ENCODE measurements at regions of chr4 and their contacts with region 1.

Region 1: DNA sequence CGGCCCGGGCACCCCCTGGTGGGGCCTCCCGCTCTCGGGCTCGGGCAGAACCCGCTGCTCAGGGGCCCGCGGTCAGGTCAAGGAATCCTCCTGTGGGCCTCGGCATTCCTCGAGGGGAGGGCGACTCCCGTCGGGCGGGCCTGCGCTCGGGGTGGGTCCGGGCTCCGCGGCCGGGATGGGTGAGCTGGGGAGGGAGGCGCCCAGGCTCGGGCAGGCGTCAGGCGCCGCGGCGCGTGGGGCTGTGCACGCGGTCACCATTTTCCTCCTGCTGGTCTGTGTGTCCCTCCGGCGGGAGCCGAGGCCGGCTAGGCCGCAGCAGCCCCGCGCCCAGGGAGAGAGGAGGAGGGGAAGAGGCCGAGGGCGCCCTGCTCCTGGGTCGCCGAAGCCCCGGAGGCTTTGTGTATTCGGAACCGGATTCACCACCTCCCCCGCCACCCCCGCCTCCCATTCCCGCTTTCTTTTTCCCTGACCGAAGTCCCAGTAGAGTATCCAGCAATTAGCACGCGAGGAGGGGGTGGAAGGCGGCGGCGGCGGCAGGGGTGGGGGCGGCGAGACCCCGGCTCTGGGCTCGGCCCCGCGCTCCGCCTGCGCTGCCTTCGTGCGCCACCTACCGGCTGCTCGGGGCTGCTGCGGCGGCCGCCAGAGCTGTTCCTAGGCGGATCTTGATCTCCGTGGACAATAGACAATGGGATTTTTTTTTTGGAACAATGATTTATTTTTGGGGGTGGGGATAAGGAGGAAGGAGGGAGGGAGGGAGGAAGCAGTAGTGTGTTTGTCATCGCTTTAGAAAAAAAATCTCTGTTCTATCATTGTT is 99.0 kb upstream of the MAML3 start:
- DNase-seq: peak; percentile 92
- H3K4me3 ChIP-seq: peak overlapping the region; percentile 43 to 76 (median 61)
- H3K27ac ChIP-seq: peak overlapping the region; percentile 67 to 90 (median 84)
- H3K4me1 ChIP-seq: peaks cover 0 to 35% (median 19%) of the 10 kb centered on the region in 6 donors
- H3K27me3 ChIP-seq: peaks cover 0 to 21% (median 6%) of the 10 kb centered on the region in 7 donors
- CTCF ChIP-seq: peak; percentile 72 to 98 (median 91)
- POLR2A ChIP-seq: no peak

Region 2: DNA sequence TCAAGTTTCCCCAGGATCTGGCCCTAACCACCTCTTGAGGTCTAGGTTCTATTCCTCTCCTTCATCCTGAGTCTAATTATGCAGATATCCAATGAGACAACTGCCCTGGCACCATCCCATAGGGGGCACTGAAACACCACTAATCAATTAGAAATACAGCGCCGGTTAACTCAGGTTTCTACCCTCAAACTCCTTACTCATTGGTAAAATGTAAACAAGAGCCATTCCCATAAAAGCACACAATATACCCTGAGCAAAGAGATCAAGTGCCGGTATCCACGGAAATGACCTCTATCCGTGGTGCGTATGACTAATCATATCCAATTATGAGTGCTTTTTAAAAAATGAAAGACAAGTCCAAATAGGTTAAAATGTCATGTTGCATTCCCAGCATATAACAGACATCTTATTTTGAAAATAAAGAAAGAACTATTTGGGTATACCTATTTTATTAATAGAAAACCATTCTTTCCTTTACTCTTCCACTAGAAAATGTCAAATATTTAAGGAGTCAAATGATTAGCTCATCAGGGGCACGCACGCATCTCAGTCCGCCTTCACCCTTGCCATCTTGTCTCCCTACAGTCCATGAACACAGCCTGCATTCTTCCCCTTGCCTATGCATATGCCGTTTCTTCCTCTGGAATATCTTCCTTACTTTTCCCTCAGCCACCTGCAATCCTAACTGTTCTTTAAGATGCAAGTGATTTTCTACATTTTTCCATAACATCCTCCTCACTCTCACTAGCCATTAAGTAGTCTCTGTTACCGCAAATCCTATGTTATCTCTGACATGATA is 240.1 kb before region 1 on chr4:
- intact Hi-C with region 1: loop called (anchors 5 kb)
- DNase-seq: no peak
- H3K4me3 ChIP-seq: no peak overlapping the region
- H3K27ac ChIP-seq: peak overlapping the region in 2 of 8 donors; percentile 16 to 23
- H3K4me1 ChIP-seq: peaks cover 0 to 15% (median 8%) of the 10 kb centered on the region in 6 donors
- H3K27me3 ChIP-seq: no peaks in the 10 kb centered on the region
- CTCF ChIP-seq: peak; percentile 44 to 84 (median 75)
- POLR2A ChIP-seq: no peak

Region 3: GRCh38 chr4:140153718-140154571 is 99.0 kb before region 1 on chr4 and contains the start of gene MAML3:
- intact Hi-C with region 1: loop called (anchors 5 kb)
- DNase-seq: peak; percentile 96
- H3K4me3 ChIP-seq: peak within 1 kb of the TSS; percentile 60 to 89 (median 76)
- H3K27ac ChIP-seq: peak within 1 kb of the TSS; percentile 93 to 99 (median 98)
- H3K4me1 ChIP-seq: peaks cover 0 to 86% (median 46%) of the 10 kb centered on the region in 6 donors
- H3K27me3 ChIP-seq: peaks cover 0 to 67% (median 8%) of the 10 kb centered on the region in 7 donors
- CTCF ChIP-seq: peak in 1 of 11 experiments; percentile 14
- POLR2A ChIP-seq: peak in 2 of 3 donors; percentile 66 to 81
- total RNA-seq, gene MAML3: 6.7 to 18.4 (median 14.7) TPM

Region 4: DNA sequence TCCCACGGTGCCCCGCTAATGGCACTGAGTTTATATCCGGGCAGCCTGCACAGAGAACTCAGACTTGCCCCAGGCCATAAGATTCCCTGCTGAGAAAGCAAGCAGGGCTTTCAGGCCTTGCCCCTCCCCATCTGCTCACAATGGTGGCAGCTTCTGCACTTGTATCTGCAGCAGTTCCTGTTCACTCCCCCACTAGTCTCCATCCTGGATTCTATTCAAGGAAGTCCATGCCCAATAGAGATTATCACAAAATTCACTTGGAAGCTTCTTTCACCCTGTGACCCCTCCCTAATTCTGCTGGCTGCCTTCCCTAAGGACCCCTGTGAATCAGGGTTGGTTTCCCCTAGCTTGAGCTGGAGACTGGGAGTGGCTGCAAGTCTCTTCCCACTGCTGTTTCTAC is 350.3 kb after region 1 on chr4:
- intact Hi-C with region 1: no loop called
- DNase-seq: no peak
- H3K4me3 ChIP-seq: no peak overlapping the region
- H3K27ac ChIP-seq: no peak overlapping the region
- H3K4me1 ChIP-seq: no peaks in the 10 kb centered on the region
- H3K27me3 ChIP-seq: peaks cover 0 to 8% (median 0%) of the 10 kb centered on the region in 7 donors
- CTCF ChIP-seq: no peak
- POLR2A ChIP-seq: no peak

Measured in spleen (tissue), 13 donors.